Activated CD4-positive, alpha-beta T cell treated with anti-CD3 and anti-CD28 coated beads, Interleukin-2, amount 10 ng/mL, durations not matched to agents 24 days and 14 days (primary cell): ENCODE measurements at regions of chr1 and their contacts with region 1.

Region 1: DNA sequence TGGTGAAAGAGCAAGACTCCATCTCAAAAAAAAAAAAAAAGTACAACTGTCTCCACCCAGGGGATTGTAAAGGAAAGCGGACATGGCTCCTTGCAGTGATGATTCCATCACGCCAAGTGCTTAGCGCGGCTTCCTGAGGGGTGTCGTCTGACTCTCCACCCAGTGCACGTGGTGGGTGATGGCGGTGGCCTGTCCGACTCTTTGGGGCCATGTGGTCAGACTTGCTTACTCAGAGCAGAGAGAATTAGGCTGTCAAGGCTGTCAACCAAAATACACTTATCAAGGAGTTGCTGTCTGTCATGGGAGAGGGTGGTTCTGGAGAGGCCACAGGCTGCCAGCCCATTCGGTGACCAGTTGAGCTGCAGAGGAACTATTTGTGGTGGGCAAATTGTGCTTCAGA is 49.4 kb downstream of the PTPRF start:
- DNase-seq: no peak
- H3K4me3 Mint-ChIP-seq: no peak overlapping the region
- H3K27ac Mint-ChIP-seq: no peak overlapping the region
- H3K4me1 Mint-ChIP-seq: peaks cover 4% of the 10 kb centered on the region
- H3K27me3 Mint-ChIP-seq: no peaks in the 10 kb centered on the region

Region 2: GRCh38 chr1:43650310-43651085 is 70.5 kb after region 1 on chr1:
- intact Hi-C with region 1: loop called (anchors 2 kb)
- DNase-seq: peak; percentile 97
- H3K4me3 Mint-ChIP-seq: peak overlapping the region; percentile 91
- H3K27ac Mint-ChIP-seq: peak overlapping the region; percentile 98
- H3K4me1 Mint-ChIP-seq: peaks cover 25% of the 10 kb centered on the region
- H3K27me3 Mint-ChIP-seq: peaks cover 5% of the 10 kb centered on the region